Activated CD4-positive, alpha-beta T cell treated with anti-CD3 and anti-CD28 coated beads, Interleukin-2, amount 10 ng/mL, durations not matched to agents 24 days and 14 days (primary cell): ENCODE measurements at regions of chr6 and their contacts with region 1.

Region 1: DNA sequence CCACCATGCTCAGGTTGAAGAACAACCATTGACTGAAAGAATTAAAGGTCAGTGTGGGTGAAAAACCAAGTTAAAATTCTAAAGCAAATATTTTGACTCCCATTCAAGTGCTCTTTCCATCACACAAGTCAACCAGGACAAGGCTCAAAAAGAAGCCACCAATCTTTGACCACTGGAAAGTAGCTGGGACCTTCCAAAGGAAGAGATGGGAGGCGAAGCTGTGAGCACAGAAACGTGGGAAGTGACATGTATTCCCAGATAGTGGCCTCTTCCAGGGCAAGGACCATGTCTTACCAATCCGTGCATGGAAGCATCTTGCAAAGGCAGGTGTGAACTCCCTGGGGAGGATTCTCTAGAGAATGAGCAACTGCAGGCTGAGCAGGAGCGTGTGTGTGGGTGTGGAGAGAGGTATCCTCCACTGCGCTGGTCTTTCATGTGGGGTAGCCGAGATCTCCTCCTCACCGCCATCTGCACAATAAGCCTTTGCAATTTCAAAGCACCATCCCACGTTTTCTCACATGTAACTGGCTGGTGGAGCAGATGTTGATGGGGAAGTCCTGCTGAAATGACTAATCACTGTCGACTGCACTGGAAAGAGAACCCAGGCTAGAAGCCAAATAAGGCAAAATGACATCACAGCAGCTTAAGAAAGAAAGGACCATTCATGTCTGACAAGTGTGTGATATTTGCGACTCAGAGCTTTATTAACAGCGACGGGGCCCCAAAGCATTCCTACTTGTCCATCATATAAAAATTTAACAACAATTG is 189.4 kb upstream of the RREB1 start:
- DNase-seq: peak; percentile 81
- H3K4me3 Mint-ChIP-seq: no peak overlapping the region
- H3K27ac Mint-ChIP-seq: peak overlapping the region; percentile 77
- H3K4me1 Mint-ChIP-seq: peaks cover 23% of the 10 kb centered on the region
- H3K27me3 Mint-ChIP-seq: peaks cover 45% of the 10 kb centered on the region

Region 2: DNA sequence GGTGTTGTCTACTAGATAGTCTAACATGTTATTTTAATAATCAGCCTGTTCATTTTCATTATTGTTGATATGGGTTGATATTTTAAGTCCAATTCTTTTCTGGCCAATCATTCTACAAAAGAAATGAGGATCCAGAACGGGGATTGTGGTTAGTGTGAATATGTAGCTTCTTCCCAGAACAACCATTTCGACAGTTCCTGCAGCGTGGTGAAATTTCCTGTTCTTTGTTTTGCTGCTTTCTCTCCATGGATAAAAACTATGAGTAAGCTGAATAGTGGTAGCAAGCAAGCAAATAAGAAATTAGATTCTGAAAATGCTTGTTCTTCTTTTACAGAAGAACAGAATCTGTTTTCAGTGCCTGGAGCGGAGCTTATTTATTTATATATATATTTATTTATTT is 532.4 kb before region 1 on chr6:
- intact Hi-C with region 1: no loop called
- DNase-seq: no peak
- H3K4me3 Mint-ChIP-seq: no peak overlapping the region
- H3K27ac Mint-ChIP-seq: no peak overlapping the region
- H3K4me1 Mint-ChIP-seq: no peaks in the 10 kb centered on the region
- H3K27me3 Mint-ChIP-seq: peaks cover 4% of the 10 kb centered on the region

Region 3: GRCh38 chr6:6659600-6660327 is 258.6 kb before region 1 on chr6:
- intact Hi-C with region 1: loop called (anchors 1 kb)
- DNase-seq: peak; percentile 70
- H3K4me3 Mint-ChIP-seq: peak overlapping the region; percentile 31
- H3K27ac Mint-ChIP-seq: peak overlapping the region; percentile 99
- H3K4me1 Mint-ChIP-seq: peaks cover 74% of the 10 kb centered on the region
- H3K27me3 Mint-ChIP-seq: no peaks in the 10 kb centered on the region

Region 4: GRCh38 chr6:6749702-6750491 is 168.5 kb before region 1 on chr6:
- intact Hi-C with region 1: loop called (anchors 5 kb)
- DNase-seq: peak; percentile 84
- H3K4me3 Mint-ChIP-seq: peak overlapping the region; percentile 78
- H3K27ac Mint-ChIP-seq: peak overlapping the region; percentile 63
- H3K4me1 Mint-ChIP-seq: peaks cover 26% of the 10 kb centered on the region
- H3K27me3 Mint-ChIP-seq: peaks cover 10% of the 10 kb centered on the region

Region 5: DNA sequence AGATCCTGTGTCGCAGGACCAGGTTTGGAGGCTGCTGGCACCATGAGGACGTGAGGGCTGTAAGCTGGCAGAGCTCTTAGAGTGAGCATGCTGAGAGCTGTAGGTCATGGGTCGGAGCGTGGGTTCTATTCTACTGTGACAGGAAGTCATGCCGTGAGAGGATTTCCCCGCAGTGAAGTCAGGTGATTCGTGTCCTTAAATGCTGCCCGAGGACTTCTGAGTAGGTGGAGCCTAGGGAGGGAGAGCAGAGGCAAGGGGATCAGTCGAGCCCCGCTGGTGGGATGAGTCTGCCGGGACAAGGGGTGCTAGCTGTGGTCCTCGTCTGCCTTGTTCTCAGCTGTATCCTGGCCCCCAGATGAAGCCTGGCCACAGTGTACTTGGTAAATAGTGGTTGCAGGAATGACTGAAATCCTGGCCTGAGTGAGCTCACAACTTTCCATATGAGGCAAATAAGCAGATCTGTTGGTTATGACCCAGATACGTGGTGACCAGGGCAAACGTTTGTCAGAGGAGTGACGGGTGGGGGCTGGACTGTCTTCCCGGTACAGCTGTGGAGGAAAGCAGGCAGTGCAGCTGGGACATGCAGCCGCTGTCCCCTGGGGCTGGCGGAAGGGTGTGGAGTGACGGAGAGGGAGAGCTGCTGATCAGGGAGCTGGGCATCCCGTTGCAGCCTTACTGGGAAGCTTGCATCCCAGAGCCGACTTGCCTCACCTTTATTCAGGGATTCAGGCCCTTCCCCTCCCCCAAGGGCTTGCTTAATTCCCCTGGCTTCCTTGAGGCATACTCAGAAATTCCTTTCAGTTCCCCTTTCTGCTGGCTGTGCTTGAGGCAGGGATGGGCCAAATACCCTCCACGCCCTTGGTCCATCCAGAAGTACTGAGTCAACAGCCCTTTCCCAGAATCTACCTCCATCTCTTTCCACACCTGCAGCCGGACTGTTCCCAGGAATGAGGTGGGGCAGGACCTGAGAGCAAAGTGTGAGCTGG is 61.6 kb before region 1 on chr6:
- intact Hi-C with region 1: loop called (anchors 1 kb)
- DNase-seq: peak; percentile 84
- H3K4me3 Mint-ChIP-seq: peak overlapping the region; percentile 60
- H3K27ac Mint-ChIP-seq: peak overlapping the region; percentile 89
- H3K4me1 Mint-ChIP-seq: peaks cover 30% of the 10 kb centered on the region
- H3K27me3 Mint-ChIP-seq: peaks cover 7% of the 10 kb centered on the region

Region 6: DNA sequence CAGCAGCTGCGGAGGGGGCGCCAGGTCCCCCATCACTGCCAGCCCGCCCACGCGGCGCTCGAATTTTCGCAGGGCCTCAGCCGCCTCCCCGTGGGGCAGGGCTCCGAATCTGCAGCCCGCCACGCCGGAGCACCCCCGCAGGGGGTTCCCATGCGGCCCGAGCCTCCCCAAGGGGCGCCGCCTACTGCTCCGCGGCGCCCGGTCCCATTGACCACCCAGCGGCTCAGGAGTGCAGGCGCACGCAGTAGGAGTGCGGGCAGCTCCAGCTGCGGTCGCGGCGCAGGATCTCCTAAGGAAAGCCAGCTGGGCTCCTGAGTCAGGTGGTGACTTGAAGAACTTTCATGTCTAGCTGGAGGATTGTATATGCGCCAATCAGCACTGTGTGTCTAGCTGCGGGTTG is 34.1 kb after region 1 on chr6:
- intact Hi-C with region 1: no loop called
- DNase-seq: no peak
- H3K4me3 Mint-ChIP-seq: no peak overlapping the region
- H3K27ac Mint-ChIP-seq: no peak overlapping the region
- H3K4me1 Mint-ChIP-seq: no peaks in the 10 kb centered on the region
- H3K27me3 Mint-ChIP-seq: no peaks in the 10 kb centered on the region

Region 7: GRCh38 chr6:7086488-7086887 is 168.1 kb after region 1 on chr6:
- intact Hi-C with region 1: loop called (anchors 5 kb)
- DNase-seq: peak; percentile 76
- H3K4me3 Mint-ChIP-seq: peak overlapping the region; percentile 76
- H3K27ac Mint-ChIP-seq: no peak overlapping the region
- H3K4me1 Mint-ChIP-seq: peaks cover 25% of the 10 kb centered on the region
- H3K27me3 Mint-ChIP-seq: peaks cover 54% of the 10 kb centered on the region

Region 8: DNA sequence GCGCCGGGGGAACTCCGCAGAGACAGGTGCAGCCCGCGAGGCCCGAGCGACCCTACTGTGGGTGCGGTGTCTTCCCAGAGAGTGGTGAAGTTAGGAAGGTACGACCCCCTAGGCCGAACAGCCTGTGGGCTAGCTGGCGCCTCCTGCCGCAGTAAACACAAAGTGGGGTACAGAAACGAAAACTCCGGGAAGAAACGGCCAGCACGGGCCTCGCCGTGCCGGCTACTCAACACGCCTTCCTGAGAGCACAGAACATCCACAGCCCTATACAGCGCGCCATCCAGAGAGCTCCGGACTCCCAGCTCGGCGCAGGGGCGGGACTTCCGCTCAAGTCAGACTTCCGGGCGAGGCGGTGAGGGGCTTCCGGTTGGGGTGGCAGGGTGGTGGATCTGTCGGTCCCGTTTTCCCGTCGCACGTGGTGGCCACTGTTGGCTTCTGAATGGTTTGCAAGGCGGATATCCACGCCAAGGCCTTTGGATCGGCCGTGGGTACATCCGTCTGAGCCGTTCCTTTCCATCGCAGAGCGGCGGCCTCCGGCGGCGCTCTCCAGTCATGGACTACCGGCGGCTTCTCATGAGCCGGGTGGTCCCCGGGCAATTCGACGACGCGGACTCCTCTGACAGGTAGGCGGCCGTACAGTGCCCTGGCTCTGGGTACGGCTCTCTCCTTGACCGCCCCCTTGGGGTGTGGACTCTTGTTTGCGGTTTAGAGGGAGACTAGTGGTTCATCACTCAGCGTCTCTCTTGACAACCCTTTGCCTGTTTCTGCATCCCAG is 471.2 kb after region 1 on chr6 and contains the starts of genes CAGE1 and RIOK1:
- intact Hi-C with region 1: loop called (anchors 1 kb)
- DNase-seq: peak; percentile 99
- H3K4me3 Mint-ChIP-seq: peak within 1 kb of the TSS; percentile 93
- H3K27ac Mint-ChIP-seq: peak within 1 kb of the TSS; percentile 100
- H3K4me1 Mint-ChIP-seq: peaks cover 43% of the 10 kb centered on the region
- H3K27me3 Mint-ChIP-seq: no peaks in the 10 kb centered on the region
- total RNA-seq, gene CAGE1: 0.16 and 0.31 TPM in 2 replicates
- total RNA-seq, gene RIOK1: 56.7 and 62.1 TPM in 2 replicates